BJ (cell line): ENCODE measurements at regions of chr12 and their contacts with region 1.

Region 1: GRCh38 chr12:109428037-109428629 is 49.0 kb downstream of the KCTD10 start:
- DNase-seq: peak; percentile 27
- H3K4me3 ChIP-seq: no peak overlapping the region
- H3K27me3 ChIP-seq: 0 out of 2 replicates have a peak, but pooled peaks cover 4% of the 10 kb centered on the region
- CTCF ChIP-seq: peak; percentile 99

Region 2: GRCh38 chr12:109449845-109450532 is 21.9 kb after region 1 on chr12:
- CTCF ChIA-PET with region 1: interaction called, 14 read pairs
- POLR2A ChIA-PET with region 1: no interaction called
- DNase-seq: no peak
- H3K4me3 ChIP-seq: no peak overlapping the region
- H3K27me3 ChIP-seq: no peaks in the 10 kb centered on the region
- CTCF ChIP-seq: no peak

Region 3: GRCh38 chr12:109469517-109469916 is 41.4 kb after region 1 on chr12:
- CTCF ChIA-PET with region 1: interaction called, 40 read pairs
- POLR2A ChIA-PET with region 1: no interaction called
- DNase-seq: peak; percentile 44
- H3K4me3 ChIP-seq: no peak overlapping the region
- H3K27me3 ChIP-seq: no peaks in the 10 kb centered on the region
- CTCF ChIP-seq: no peak

Region 4: GRCh38 chr12:109477185-109477962 is 49.2 kb after region 1 on chr12 and contains the starts of genes KCTD10 and UBE3B:
- CTCF ChIA-PET with region 1: interaction called, 40 read pairs
- POLR2A ChIA-PET with region 1: no interaction called
- DNase-seq: peak; percentile 28
- H3K4me3 ChIP-seq: peak within 1 kb of the TSS; percentile 84
- H3K27me3 ChIP-seq: no peaks in the 10 kb centered on the region
- CTCF ChIP-seq: no peak
- polyA plus RNA-seq, gene KCTD10: 154 and 172 TPM in 2 replicates
- polyA plus RNA-seq, gene UBE3B: 38.9 and 43.9 TPM in 2 replicates

Region 5: DNA sequence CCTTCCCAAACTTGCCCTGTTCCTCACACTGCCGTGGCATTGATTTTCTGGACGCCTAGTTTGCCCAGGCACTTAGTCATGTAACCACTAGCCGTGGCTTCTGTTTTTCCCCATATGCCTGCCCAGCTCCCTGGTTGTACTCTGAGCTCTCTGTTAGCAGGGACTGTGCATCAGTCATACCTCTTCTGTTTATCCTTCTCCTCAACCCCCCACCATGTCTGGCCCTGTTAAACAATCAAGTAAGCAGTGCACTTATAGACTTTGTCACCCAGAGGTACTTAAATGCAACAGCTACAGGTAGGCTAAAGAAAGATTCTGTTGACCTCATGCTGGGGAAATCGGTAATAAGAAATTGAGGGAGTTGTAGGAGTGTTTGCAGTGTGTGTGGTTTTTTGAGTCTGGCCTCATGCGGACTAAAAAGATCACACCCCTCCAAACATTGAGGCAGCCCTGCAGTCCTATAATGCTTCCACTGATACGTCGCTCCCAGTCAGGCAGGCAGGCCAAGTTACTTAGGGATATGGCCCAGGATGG is 66.3 kb after region 1 on chr12:
- CTCF ChIA-PET with region 1: interaction called, 11 read pairs
- POLR2A ChIA-PET with region 1: no interaction called
- DNase-seq: no peak
- H3K4me3 ChIP-seq: no peak overlapping the region
- H3K27me3 ChIP-seq: no peaks in the 10 kb centered on the region
- CTCF ChIP-seq: no peak